PC-9 (cell line): ENCODE measurements at regions of chr9 and their contacts with region 1.

Region 1: DNA sequence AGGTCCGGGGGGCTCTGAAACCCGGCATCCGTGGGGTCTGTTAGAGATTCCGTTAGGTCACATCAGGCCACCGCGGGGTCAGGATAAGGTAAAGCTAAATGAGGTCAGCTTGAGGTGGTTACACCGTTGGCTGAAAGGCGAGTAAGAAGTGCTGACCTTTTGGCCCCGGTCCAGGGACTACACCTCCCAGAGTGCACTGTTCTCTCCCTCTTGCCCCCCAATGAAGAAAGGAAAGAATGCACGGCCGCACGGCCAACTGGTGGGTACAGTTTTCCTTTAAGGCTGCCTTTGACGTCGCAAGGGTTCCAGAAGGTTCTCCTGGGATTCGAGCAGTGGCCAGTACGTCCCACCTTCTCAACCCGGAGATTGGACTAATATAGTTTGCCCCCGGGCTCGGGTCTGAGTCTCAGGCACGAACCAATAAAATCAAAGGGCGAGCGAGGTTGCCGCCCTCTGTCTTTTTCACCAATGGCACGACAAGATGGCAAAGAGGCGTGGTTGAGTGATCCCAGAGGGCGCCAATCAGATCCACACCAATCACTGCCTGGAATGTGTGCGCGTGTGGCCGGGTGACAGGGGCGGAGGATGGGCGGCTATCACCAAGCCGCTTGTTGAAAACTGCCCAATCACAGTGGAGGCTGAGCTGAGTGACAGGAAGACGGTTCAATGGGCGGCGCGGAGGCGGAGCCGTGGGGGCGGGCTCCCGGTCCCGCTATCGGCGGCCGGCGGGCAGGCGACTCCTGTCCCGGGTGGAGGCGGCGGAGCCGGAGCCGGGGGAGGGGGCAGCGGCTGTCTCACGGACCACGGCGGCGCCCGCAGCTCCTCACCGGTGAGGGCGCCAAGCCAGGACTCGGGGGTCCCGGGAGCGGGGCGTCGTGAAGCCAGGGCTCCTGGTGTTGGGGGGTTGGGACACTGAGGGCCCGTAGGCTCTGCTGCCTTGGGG is at the start of gene DNAJB5:
- DNase-seq: peak; percentile 84 to 92
- H3K4me3 ChIP-seq: peak within 1 kb of the TSS; percentile 57
- H3K27ac ChIP-seq: no peak within 1 kb of the TSS
- H3K4me1 ChIP-seq: peaks cover 7% of the 10 kb centered on the region; the same call in 1 of the 2 replicates
- H3K27me3 ChIP-seq: no peaks in the 10 kb centered on the region
- CTCF ChIP-seq: no peak
- total RNA-seq, gene DNAJB5: 0.79 and 0.98 TPM in 2 replicates

Region 2: DNA sequence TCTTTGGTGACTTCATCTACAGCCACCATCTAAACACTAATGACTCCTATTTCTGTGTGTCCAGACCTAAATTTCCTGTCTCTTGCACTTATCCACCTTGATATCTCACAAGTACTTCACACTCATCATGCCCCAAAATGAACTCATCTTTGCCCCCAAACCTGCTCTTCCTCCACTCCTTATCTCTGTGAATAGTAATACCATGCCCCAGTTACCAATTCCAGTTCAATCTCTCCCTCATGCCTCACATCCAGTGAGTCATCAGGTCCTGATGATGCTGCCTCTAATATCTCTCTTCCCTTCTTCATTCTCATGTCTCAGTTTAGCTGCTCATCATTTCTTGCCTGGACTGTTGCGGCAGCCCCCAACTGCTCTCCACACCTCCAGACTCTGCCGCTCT is 14.6 kb before region 1 on chr9:
- CTCF ChIA-PET with region 1: no interaction called
- POLR2A ChIA-PET with region 1: no interaction called
- intact Hi-C with region 1: no loop called
- DNase-seq: no peak
- H3K4me3 ChIP-seq: no peak overlapping the region
- H3K27ac ChIP-seq: no peak overlapping the region
- H3K4me1 ChIP-seq: no peaks in the 10 kb centered on the region
- H3K27me3 ChIP-seq: peaks cover 63% of the 10 kb centered on the region
- CTCF ChIP-seq: no peak

Region 3: DNA sequence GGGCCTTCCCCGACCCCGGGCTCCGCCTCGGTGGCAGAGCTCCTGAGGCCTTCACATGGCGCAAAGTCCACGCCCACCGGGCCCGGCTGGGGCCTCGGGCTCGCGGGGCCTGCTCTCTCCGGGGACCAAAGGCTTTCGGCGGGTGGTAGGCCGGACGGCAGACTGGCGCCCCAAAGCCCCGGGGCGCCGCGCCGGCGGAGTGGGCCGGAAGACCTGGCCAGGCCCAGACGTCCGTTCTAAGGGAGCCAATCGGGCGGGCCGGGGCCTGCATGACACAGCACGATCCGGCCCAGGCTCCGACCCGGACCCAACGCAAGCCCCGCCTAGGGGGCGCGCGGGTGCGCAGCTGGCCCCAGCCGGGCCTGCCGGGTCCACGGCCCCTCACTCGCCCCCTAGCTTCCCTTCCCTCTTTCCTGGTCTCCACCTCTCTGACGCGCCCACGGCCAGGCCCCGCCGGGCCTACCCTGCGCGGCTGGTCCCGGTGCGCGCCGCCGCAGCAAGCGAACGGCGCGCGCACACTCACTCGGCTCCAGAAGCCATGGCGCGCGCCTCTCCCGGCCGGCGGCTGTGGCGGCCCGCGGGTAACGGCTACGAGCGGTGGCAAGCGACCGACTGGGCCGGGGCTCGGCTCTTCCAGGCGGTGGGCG is 82.7 kb after region 1 on chr9:
- CTCF ChIA-PET with region 1: no interaction called
- POLR2A ChIA-PET with region 1: no interaction called
- intact Hi-C with region 1: loop called (anchors 5 kb)
- DNase-seq: peak; percentile 48 to 65
- H3K4me3 ChIP-seq: peak overlapping the region; percentile 91
- H3K27ac ChIP-seq: peak overlapping the region; percentile 97
- H3K4me1 ChIP-seq: peaks cover 17% of the 10 kb centered on the region
- H3K27me3 ChIP-seq: no peaks in the 10 kb centered on the region
- CTCF ChIP-seq: peak; percentile 29; the same call in 1 of the 2 replicates

Region 4: DNA sequence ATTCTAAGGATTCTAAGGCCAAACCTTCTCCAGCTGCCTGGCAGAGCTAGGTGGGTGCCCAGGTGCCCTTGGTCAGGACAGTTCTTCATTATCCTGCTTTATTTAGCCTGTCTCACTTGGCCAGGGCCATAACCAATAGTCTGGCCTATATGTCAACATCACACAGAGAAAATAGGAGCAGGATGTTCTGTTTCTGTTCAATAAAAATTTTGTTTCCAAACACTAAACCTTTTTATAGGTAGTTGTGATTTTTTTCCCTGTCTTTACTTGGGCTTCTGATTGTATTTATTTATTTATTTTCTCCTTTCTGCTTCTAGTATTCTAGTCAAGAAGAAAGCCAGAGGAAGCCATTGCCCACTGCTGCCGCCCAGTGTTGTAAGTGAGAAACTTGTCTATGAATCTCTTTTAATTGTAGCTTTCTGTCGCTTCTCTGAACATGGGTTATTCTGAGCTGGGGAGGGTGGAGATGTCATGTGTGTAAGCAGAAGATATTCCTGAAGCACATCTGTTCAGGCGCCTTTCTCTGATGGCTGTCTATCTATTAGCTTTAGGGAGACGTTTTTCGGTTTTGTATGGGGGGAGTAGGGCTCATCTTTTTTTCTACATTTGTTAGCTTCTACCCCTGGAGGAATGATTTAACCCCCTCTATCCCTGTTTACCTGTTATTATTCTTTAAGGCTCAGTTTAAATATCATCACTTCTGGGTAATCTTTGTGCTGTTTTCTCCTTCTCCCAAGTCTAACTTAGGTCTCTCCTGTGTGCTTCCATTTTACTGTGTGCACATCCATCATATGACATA is 269.6 kb after region 1 on chr9:
- CTCF ChIA-PET with region 1: no interaction called
- POLR2A ChIA-PET with region 1: no interaction called
- intact Hi-C with region 1: no loop called
- DNase-seq: peak; percentile 11 to 37
- H3K4me3 ChIP-seq: no peak overlapping the region
- H3K27ac ChIP-seq: no peak overlapping the region
- H3K4me1 ChIP-seq: no peaks in the 10 kb centered on the region
- H3K27me3 ChIP-seq: no peaks in the 10 kb centered on the region
- CTCF ChIP-seq: peak; percentile 68